Lower leg skin (tissue), 4 donors: ENCODE measurements at regions of chr22 and their contacts with region 1.

Region 1: DNA sequence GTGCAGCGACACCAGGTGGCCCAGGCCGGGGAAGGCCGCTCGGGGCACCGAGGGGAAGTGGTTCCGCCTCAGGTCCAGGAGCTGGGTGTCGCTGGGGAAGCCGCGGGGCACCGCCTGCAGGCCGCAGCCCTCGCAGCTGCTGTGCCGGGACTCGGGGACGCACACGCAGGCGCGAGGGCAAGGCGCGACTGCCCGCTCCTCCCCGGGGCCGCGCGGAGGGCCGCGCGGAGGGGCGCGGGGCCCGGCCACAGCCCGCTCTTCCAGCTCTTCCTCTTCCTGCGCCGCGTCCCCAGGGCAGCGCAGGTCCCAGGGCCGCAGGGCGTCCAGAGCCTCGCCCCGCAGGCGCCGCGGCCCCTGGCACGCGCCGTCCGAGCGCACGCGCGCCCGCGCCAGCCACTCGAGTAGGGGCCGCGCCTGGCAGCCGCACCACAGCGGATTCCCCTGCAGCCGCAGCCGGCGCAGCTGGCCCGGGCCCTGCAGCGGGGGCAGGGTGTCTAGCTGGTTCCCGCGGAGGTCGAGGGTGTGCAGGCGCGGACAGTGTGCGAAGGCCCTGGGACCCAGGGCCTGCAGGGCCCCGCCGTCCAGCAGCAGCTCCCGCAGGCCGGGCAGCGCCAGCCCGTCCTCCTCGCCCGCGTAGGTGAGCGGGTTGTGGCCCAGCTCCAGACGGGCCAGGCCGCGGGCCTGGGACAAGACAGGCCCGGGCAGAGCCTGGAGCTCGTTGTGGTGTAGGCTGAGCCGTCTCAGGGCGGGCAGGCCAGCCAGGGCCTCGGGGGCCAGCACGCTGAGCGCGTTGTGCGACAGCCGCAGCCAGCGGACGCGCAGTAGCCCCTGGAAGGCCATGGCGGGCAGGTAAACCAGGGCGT is 2.8 kb downstream of the CHADL start:
- DNase-seq: peak in 1 of 2 donors; percentile 51
- H3K4me3 ChIP-seq: peak overlapping the region; percentile 22
- CTCF ChIP-seq: no peak
- POLR2A ChIP-seq: no peak

Region 2: DNA sequence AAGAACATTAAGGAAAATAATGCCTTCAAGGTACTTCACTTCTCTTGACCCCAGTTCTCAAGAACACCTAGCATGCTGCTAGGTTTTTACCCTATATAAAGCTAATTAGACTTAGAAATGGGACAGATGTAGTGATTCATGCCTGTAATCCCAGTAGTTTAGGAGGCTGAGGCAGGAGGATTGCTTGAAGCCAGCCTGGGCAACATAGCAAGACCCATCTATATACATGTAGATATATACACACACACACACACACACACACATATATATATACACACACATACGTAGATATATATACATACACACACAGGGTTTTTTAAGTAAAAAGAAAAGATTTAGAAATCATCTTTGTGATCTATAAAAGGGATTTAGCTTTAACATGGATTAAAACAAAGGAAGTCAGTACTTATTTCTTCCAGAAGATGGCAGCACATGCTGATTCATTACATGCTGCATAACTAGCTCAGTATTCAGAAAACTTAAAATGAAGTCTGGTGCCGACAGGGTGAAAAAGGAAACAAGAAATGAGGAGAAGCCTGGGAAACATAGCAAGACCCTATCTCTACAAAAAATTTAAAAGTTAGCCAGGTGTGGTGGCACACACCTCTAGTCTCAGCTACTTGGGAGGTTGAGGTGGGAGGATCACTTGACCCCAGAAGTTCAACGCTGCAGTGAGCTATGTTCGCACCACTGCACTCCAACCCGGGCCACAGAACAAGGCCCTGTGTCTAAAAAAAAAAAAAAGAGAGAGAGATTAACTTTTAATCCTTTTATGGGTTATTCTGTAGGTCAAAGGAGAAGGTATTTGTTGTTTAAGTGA is 315.2 kb before region 1 on chr22:
- intact Hi-C with region 1: loop called (anchors 5 kb)
- DNase-seq: peak in 1 of 2 donors; percentile 16
- H3K4me3 ChIP-seq: no peak overlapping the region
- CTCF ChIP-seq: no peak
- POLR2A ChIP-seq: no peak